OCI-LY7 (cell line): ENCODE measurements at regions of chr3 and their contacts with region 1.

Region 1: GRCh38 chr3:31952205-31952604 is 28.9 kb downstream of the OSBPL10 start:
- DNase-seq: peak; percentile 99
- H3K4me3 ChIP-seq: peak overlapping the region; percentile 57
- H3K27ac ChIP-seq: peak overlapping the region; percentile 100
- H3K4me1 ChIP-seq: peaks cover 87% of the 10 kb centered on the region
- CTCF ChIP-seq: no peak

Region 2: DNA sequence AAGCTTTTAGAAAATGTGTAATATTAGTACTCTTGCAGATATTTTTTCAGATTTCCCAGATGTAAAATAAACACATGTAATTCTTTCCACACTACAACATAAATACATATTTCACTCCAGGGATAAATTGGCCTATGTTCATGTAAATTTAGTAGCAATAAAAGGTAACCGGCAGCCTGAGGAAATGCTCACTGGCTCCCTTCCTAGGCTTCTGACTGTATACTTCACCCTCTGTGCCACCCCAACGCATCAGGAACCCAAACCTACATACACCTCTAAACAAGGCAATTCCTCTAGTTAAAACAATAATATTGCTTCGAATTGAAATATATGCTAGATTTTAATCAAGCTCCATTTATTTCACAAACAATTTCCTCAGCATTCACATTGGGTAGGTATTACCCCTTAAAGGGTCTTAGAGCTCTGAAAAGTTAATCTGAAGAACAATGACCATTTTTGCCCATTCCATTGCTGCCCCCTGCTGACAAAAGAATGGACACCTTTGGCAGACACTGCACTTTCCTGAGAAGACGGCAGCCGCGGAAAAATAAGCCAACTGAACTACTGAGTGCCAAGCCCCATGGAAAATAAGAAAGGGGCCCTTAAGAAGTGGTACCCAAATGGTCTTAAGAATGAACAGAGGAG is 183.6 kb before region 1 on chr3:
- CTCF ChIA-PET with region 1: no interaction called
- POLR2A ChIA-PET with region 1: no interaction called
- intact Hi-C with region 1: no loop called
- DNase-seq: no peak
- H3K4me3 ChIP-seq: no peak overlapping the region
- H3K27ac ChIP-seq: no peak overlapping the region
- H3K4me1 ChIP-seq: peaks cover 24% of the 10 kb centered on the region
- CTCF ChIP-seq: peak; percentile 52

Region 3: GRCh38 chr3:31876331-31876730 is 75.9 kb before region 1 on chr3:
- CTCF ChIA-PET with region 1: no interaction called
- POLR2A ChIA-PET with region 1: interaction called, 10 read pairs
- intact Hi-C with region 1: loop called (anchors 2 kb)
- DNase-seq: no peak
- H3K4me3 ChIP-seq: peak overlapping the region; percentile 68
- H3K27ac ChIP-seq: peak overlapping the region; percentile 90
- H3K4me1 ChIP-seq: peaks cover 83% of the 10 kb centered on the region
- CTCF ChIP-seq: no peak

Region 4: DNA sequence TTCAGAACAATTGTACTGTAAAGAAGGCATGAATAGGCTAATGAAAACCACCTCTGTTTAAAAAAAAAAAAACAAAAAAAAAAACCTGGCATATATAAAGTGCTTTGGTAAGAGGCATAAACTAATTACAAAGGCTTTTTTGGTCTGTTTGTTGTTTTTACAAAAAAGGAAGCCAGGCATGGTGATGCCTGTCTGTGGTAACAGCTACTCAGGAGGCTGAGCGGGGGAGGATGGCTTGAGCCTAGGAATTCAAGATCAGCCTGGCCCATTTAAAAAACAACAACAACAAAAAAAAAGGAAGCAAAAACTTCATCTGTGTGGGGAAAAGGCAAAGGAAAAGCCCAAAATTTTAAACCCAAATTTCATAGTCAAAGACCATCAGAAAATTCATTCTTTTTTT is 18.2 kb before region 1 on chr3:
- CTCF ChIA-PET with region 1: no interaction called
- POLR2A ChIA-PET with region 1: interaction called, 141 read pairs
- intact Hi-C with region 1: loop called (anchors 1 kb)
- DNase-seq: peak; percentile 66
- H3K4me3 ChIP-seq: peak overlapping the region; percentile 50
- H3K27ac ChIP-seq: peak overlapping the region; percentile 94
- H3K4me1 ChIP-seq: peaks cover 99% of the 10 kb centered on the region
- CTCF ChIP-seq: no peak

Region 5: DNA sequence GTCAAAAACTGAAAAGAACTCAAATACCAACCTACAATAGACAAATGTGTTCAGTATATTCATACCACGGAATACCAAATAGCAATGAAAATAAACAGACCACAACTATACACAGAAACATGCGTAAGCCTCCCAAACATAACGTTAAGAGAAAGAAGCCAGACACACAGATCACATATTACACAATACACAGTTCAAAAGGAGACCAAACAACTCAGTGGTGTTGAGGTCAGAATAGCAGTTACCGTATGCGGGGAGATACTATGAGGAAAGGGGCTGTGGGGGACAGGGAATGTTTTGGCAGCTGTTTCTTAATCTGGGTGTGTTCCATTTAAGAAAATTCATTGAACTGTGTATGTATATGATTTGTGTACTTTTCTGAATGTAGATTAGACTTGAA is 22.3 kb after region 1 on chr3:
- CTCF ChIA-PET with region 1: interaction called, 4 read pairs
- POLR2A ChIA-PET with region 1: interaction called, 57 read pairs
- intact Hi-C with region 1: loop called (anchors 1 kb)
- DNase-seq: no peak
- H3K4me3 ChIP-seq: peak overlapping the region; percentile 91
- H3K27ac ChIP-seq: peak overlapping the region; percentile 88
- H3K4me1 ChIP-seq: peaks cover 100% of the 10 kb centered on the region
- CTCF ChIP-seq: no peak